ENCODE measurements at regions of chr16 and their contacts with region 1.

Region 1: DNA sequence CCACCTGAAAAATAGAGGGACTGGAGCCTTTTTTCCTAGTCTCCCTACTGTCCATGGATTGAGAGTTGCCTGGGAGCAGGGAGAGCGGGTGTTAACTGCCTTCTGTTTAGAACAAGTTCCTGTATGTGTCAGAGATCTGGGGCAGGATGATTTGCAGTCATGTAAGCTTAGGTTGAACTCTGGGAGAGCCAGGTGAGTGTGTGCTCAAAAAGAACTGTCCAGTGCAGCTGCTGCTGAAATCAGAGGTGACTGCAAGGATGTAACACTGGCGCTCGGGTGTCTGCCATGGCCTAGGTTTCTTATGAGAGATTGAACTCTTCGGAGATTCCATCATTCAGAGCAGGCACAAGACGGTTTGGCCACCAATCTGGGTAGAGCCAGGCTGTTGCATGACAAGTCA is 432.5 kb downstream of the CDH13 start:
- DNase-seq: no peak
- ATAC-seq: no peak

Region 2: DNA sequence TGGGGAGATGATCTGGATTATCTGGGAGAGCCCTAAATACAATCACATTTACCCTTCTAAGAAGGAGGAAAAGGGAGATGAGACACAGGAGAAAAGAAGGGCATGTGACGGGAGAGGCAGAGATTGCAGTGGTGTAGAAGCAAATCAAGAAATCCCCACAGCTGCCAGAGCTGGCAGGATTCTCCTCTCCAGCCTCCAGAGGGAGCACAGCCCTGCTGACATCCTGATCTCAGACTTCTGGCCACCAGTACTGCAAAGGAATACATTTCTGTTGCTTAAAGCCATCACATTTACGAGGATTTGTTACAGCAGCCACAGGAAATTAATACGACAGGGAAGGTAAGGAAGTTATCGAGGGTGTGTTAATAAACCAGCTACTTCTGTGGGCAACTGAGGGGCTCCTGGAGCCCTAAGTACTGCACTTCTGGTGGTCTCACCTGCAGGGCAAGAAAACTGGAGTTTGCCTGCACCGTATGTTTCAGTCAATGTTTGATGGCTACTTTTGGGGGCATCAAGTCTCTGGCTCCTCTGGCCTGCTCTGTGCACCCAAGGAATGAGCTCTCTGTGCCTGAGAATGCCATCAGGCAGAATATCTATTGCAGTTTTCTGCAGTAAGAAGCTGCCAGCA is 455.3 kb before region 1 on chr16:
- intact Hi-C with region 1: loop called (anchors 2 kb)
- DNase-seq: no peak
- ATAC-seq: peak; percentile 45

Region 3: DNA sequence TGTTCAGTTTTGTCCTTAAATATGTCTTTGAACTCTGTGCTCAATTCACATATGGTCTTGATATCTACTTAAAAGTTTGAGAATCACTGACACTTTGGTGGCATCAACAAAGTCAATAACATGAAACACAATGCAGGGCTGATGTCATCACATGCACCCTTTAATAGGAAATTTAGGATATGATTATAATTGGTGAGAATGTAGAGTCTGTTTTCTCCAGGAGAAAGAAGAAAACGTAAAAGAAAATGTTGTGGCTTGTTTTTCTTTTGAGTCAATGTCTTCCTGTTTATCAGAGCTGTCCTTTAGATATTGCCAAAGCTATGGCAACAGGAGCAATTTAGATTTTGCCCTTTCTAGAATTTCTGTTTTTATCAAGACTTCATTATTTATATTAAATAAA is 35.6 kb before region 1 on chr16:
- intact Hi-C with region 1: no loop called
- DNase-seq: no peak
- ATAC-seq: no peak

Measured in sciatic nerve (tissue), 2 donors.